Mammary epithelial cell (primary cell): ENCODE measurements at regions of chr9 and their contacts with region 1.

Region 1: DNA sequence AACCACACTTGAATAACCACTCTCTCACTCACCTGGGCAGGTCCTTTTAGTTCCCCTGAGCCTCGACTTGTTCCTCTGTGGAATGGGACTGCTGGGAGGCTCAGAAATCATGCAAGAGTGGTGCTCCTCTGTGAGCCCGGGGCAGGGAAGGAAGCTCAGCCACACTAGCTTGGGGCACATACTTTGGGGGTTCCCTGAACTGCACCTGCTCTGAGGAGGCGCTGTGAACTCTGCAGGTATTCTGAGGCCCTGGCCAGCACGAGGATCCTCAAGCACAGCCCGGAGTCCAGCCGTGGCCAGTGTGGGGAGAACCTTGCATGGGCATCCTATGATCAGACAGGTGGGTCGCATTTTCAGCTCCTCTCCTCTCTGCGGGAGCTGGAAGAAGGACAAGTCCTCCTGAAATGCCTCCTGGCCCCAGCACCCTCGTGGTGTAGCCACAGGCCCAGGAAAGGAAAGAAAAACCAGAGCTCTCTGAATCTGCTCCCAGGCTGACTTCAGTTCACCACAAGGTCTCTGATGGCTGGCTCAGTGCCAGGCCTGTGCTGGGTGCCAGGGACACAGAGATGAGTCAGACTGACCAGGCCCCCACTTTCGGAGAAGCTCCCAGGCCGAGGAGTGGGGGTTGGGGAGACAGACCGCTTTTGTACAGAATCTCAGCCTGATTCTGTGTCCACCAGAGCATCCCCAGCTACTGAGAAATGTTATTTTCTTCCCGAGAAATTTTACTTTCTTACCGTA is 11.9 kb downstream of the GLIPR2 start:
- DNase-seq: peak; percentile 92
- H3K4me3 ChIP-seq: no peak overlapping the region
- H3K27ac ChIP-seq: no peak overlapping the region
- H3K4me1 ChIP-seq: peaks cover 24% of the 10 kb centered on the region
- H3K27me3 ChIP-seq: no peaks in the 10 kb centered on the region
- CTCF ChIP-seq: no peak

Region 2: GRCh38 chr9:35962126-35962906 is 186.2 kb before region 1 on chr9:
- CTCF ChIA-PET with region 1: no interaction called
- dilution Hi-C with region 1: loop called (anchors 10 kb)
- in situ Hi-C with region 1: no loop called
- intact Hi-C with region 1: no loop called
- DNase-seq: no peak
- H3K4me3 ChIP-seq: no peak overlapping the region
- H3K27ac ChIP-seq: no peak overlapping the region
- H3K4me1 ChIP-seq: no peaks in the 10 kb centered on the region
- H3K27me3 ChIP-seq: no peaks in the 10 kb centered on the region
- CTCF ChIP-seq: no peak

Region 3: GRCh38 chr9:36053971-36054370 is 94.5 kb before region 1 on chr9:
- CTCF ChIA-PET with region 1: no interaction called
- dilution Hi-C with region 1: no loop called
- in situ Hi-C with region 1: no loop called
- intact Hi-C with region 1: no loop called
- DNase-seq: no peak
- H3K4me3 ChIP-seq: no peak overlapping the region
- H3K27ac ChIP-seq: no peak overlapping the region
- H3K4me1 ChIP-seq: no peaks in the 10 kb centered on the region
- H3K27me3 ChIP-seq: no peaks in the 10 kb centered on the region
- CTCF ChIP-seq: no peak

Region 4: DNA sequence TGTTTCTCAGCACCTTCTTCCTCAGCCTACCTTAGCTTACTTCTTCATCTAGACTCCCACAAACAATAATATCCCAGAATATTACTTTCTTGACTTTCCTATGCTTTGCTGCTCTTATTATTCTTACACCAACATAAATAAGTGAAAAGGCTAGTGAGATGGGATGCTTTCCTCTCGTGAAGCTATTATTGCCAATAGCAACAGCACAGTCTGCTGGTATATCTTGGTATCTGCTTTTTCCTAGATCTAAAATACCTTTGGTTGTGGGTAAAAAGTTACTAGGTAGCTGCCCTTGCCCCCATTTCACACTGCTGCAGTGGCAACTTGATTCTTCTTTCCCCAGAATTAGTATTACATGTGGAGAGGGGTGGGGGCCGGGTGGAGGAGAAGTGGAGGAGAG is 38.0 kb before region 1 on chr9:
- CTCF ChIA-PET with region 1: no interaction called
- dilution Hi-C with region 1: loop called (anchors 5 kb)
- in situ Hi-C with region 1: no loop called
- intact Hi-C with region 1: no loop called
- DNase-seq: no peak
- H3K4me3 ChIP-seq: no peak overlapping the region
- H3K27ac ChIP-seq: no peak overlapping the region
- H3K4me1 ChIP-seq: no peaks in the 10 kb centered on the region
- H3K27me3 ChIP-seq: no peaks in the 10 kb centered on the region
- CTCF ChIP-seq: peak; percentile 9 to 39

Region 5: GRCh38 chr9:36218411-36218901 is 70.0 kb after region 1 on chr9:
- CTCF ChIA-PET with region 1: no interaction called
- dilution Hi-C with region 1: loop called (anchors 10 kb)
- in situ Hi-C with region 1: no loop called
- intact Hi-C with region 1: no loop called
- DNase-seq: no peak
- H3K4me3 ChIP-seq: no peak overlapping the region
- H3K27ac ChIP-seq: no peak overlapping the region
- H3K4me1 ChIP-seq: no peaks in the 10 kb centered on the region
- H3K27me3 ChIP-seq: no peaks in the 10 kb centered on the region
- CTCF ChIP-seq: no peak

Region 6: DNA sequence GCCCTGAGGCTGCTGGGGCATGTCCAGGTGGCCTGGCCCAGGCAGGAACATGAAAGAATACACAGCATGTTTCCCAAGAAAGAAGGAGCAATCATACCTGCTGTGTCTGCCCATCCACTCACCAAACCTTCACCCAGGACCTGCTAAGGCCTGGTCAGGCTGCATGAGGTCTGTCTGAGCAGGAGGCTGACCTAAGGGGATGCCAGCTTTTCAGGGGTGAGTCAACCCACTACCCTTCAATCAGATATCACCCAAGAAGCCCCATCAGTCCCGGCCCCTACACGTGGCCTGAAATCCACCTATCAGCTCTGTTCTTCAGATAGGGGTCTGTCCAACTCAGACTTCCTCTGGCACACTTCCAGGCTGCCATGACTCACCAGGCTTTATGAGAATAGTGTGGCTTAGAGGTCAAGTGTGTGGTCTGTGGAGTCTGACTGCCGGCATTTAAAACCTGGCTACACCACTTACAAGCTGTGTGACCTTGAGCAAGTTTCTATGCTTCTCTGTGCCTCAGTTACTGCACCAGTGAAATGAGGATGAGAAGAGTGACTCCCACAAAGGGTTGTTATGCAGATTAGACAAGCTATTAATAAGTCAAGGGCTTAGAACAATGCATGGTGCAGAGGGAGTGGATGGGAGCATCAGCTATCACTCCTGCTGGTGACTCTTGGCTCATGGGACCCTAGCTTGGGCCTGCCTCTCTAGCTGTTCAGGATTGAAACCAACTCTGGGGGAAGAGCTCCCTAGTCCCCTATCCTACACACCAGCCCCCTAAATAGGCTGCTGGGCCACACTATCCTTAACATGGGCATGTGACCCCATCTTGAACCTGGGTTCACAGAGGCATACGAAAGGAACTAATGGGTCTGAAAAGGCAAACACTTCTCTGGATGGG is 755.3 kb after region 1 on chr9:
- CTCF ChIA-PET with region 1: no interaction called
- dilution Hi-C with region 1: no loop called
- in situ Hi-C with region 1: no loop called
- intact Hi-C with region 1: no loop called
- DNase-seq: peak; percentile 73
- H3K4me3 ChIP-seq: no peak overlapping the region
- H3K27ac ChIP-seq: no peak overlapping the region
- H3K4me1 ChIP-seq: peaks cover 10% of the 10 kb centered on the region
- H3K27me3 ChIP-seq: peaks cover 19% of the 10 kb centered on the region
- CTCF ChIP-seq: no peak